Left ventricle myocardium superior (tissue), 1 donor: ENCODE measurements at regions of chr13 and their contacts with region 1.

Region 1: DNA sequence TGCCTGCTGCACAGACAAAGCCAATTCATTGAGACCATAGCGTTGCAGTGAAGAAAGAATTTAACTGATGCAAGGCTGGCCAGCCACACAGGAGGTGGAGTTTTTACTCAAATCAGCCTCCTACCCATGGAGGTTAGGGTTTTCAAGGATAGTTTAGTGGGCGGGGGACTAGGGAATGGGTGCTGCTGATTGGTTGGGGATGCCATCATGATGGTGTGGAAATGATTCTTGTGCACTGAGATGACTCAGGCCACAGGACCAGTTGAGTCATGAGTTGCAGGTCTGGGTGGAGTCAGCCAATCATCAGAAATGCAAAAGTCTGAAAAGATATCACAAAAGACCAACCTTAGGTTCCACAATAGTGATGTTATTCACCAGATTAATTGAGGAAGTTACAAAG is 359.6 kb downstream of the FOXO1 start:
- DNase-seq: no peak
- ATAC-seq: no peak

Region 2: DNA sequence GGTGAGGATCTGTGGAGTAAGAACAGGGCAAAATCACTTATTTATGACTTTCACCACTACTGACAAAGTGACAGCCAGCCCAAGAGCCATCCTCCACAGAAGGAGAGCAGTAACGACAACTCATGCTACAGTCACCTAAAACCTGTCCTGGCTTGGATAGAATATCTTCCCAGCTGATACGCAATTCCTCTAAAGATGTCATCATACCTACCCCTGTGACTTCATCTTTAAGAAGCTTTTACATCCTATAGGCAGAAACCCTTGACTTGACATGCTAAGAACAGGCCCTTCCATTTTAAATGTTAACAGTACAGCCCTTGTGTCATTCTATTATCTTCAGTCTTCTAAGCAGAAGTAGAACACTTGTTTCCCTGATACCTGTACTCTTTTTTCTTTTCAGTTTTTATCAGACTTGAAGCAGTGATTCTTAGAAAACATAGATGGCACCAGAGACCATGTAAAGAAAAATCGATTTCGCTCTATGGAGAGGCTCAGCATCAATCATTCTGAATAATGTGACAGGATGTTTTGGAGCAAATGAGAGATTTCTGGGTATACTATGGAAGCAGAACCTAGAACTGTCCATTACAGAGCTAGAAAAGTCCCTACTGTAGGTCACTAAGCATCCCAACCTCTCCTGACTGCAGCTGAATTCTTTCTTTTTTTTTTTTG is 1336.3 kb before region 1 on chr13:
- intact Hi-C with region 1: no loop called
- DNase-seq: no peak
- ATAC-seq: no peak

Region 3: DNA sequence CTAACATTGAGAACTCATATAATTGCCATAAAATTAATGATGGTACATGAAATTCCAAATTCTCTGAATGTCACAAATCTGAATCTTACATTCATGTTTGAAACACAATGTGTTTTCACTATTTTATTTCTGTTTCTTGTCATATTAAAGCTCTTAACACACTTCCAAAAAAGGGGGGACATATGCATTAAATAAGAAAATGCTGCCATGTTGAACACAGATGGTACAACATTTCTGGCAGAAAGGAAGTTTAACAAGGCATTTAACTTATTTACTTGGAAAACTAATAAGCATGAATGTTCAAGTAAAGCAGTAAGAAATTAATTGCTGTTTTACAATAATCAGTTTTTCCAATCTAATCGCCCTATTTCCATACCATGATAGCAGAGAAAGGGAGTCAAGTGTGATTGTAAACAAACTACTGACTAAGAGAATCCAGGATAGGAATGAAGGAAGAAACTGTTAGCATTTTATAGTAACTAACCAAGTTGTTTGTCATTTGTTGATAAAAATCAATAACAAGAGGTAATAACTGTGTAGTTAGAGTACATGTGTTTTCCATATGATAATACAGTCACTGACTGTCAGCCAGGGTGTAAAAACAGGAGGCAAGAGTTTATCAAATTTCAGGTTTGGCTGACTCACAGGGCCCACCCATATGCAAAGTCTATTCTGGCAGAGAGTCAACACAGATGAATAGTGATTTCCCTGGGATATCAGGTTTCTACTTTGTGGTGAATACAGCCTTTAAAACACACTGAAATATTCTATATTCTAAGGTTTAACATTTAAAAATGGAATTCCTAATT is 365.3 kb after region 1 on chr13:
- intact Hi-C with region 1: loop called (anchors 10 kb)
- DNase-seq: no peak
- ATAC-seq: no peak